ENCODE measurements at regions of chr1 and their contacts with region 1.

Region 1: DNA sequence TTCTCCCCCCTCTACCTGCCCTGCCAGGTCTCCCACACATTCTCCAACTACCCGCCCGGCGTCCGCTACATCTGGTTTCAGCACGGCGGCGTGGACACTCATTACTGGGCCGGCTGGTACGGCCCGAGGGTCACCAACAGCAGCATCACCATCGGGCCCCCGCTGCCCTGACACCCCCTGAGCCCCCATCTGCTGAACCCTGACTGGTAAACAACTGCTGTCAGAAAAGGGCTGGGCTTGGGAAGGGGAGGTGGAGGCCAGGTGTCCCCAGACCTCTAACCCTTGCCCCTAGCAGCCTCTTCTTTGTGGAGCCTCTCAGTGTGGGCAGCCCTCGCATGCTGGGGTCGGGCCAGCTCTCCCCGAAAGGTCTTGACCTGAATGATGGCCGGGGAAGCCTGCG is 2.9 kb upstream of the FBXO6 start:
- DNase-seq: no peak
- ATAC-seq: no peak
- H3K4me3 ChIP-seq: no peak overlapping the region
- H3K4me3 Mint-ChIP-seq: no peak overlapping the region
- H3K27ac ChIP-seq: no peak overlapping the region
- H3K27ac Mint-ChIP-seq: no peak overlapping the region
- H3K4me1 ChIP-seq: peaks cover 0 to 9% of the 10 kb centered on the region in 2 donors
- H3K4me1 Mint-ChIP-seq: peaks cover 3% of the 10 kb centered on the region
- H3K27me3 ChIP-seq: no peaks in the 10 kb centered on the region
- H3K27me3 Mint-ChIP-seq: no peaks in the 10 kb centered on the region
- CTCF ChIP-seq: no peak

Region 2: GRCh38 chr1:11707621-11708276 is 46.6 kb after region 1 on chr1:
- CTCF ChIA-PET with region 1: interaction called, 11 read pairs
- POLR2A ChIA-PET with region 1: no interaction called
- intact Hi-C with region 1: no loop called
- DNase-seq: no peak
- ATAC-seq: no peak
- H3K4me3 ChIP-seq: no peak overlapping the region
- H3K4me3 Mint-ChIP-seq: no peak overlapping the region
- H3K27ac ChIP-seq: no peak overlapping the region
- H3K27ac Mint-ChIP-seq: no peak overlapping the region
- H3K4me1 ChIP-seq: no peaks in the 10 kb centered on the region
- H3K4me1 Mint-ChIP-seq: no peaks in the 10 kb centered on the region
- H3K27me3 ChIP-seq: peaks cover 0 to 12% (median 0%) of the 10 kb centered on the region in 4 experiments
- H3K27me3 Mint-ChIP-seq: peaks cover 13% of the 10 kb centered on the region
- CTCF ChIP-seq: no peak

Region 3: DNA sequence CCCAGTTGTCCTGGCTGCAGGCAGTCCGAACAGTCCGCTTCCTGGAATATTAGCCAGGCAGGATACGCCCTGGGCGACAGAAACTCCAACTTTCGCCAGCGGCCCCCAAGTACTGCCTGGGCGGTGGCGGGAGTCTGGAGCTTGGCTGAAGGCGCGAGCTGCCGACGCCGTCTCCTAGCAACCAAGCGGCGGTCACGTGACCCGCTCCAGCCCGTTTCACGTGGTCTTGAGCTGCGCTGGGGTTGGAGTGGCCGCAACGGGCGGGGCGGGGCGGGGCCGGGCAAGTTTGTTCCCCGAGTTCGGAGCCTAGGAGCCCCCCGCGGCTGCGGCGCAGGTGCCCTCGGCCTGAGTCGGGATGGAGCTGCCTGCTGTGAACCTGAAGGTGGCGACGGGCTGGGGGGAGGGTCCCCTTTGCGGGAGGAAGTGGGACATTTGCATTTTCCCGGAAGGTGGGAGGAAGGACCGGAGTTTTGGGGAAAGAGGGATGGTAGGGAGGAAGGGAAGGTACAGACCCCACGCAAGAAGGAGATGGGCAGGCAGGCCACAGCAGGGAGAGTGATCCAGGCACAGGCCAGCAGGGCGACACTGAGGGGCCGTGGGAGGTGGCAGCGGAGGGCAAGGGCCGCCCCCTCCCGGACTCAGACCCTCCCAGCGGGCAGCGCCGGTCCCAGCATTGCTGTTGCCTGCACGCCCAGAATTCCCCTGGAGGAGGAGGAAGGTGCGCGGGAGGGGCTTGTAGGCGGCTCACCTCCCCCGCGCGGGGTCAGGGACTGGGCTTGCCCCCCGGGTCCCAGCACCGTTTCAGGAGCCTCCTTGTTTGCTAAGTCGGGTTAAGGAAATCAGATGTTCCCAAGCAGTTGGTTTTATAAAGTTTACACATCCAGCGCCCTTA is 75.0 kb after region 1 on chr1 and contains the start of gene AGTRAP:
- CTCF ChIA-PET with region 1: interaction called, 9 read pairs
- POLR2A ChIA-PET with region 1: interaction called, 8 read pairs
- intact Hi-C with region 1: loop called (anchors 1 kb)
- DNase-seq: peak; percentile 94
- ATAC-seq: peak; percentile 90
- H3K4me3 ChIP-seq: peak within 1 kb of the TSS; percentile 67 to 99 (median 98)
- H3K4me3 Mint-ChIP-seq: peak within 1 kb of the TSS; percentile 97
- H3K27ac ChIP-seq: peak within 1 kb of the TSS; percentile 14 to 83
- H3K27ac Mint-ChIP-seq: peak within 1 kb of the TSS; percentile 93
- H3K4me1 ChIP-seq: peaks cover 33 to 42% of the 10 kb centered on the region in 2 donors
- H3K4me1 Mint-ChIP-seq: peaks cover 42% of the 10 kb centered on the region
- H3K27me3 ChIP-seq: no peaks in the 10 kb centered on the region
- H3K27me3 Mint-ChIP-seq: no peaks in the 10 kb centered on the region
- CTCF ChIP-seq: no peak
- total RNA-seq, gene AGTRAP: 18.3 and 20.2 TPM in 2 replicates